K562 (cell line): ENCODE measurements at regions of chr5 and their contacts with region 1.

Region 1: DNA sequence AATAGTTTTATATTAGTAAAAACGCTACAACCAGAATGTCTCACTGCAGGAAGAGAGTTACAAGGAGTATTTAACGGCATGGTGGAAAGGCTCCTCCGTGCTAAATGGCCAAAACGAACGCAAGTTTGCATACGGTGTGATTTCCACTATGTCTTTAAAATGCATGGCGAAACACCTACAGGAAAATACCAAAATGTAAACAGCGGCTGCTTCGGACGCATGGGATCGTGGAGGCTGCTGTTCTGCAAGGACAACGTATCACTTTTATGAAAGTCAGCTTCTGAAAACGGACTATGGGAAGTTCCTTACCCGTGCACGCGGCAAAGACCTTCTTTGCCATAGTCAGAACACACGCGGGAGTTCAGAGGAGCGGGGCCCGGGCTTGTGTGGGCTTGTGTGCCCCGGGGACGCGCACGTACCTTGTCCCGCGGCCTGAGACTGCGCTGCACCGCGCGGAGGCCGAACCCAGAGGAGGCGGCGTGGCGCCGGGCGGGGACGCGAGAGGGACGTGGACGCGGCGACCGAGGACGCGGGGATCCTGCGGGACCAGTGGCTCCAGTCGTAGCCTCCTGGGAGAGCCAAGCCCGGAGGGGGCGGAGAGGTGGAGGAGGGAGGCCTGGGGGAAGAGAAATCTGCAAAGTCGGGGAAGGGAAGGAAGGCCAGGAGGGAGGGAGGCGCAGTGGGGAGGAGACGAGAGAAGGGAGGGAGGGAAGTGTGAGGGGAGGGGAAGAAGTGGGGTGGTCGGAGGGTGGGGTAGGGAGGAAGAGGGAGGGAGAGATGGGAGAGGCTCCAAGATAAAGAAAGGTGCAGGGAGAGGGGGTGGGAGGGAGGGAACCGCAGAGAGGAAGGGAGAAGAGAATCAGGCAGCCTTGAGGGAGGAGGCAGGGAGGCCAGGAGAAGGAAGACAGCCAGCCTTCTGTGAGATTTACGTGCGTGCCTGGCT is at the start of gene CMBL:
- DNase-seq: peak; percentile 90 to 95 (median 92)
- ATAC-seq: peak; percentile 70
- H3K4me3 ChIP-seq: peak within 1 kb of the TSS; percentile 78
- H3K27ac ChIP-seq: peak within 1 kb of the TSS; percentile 91
- H3K4me1 ChIP-seq: peaks cover 48 to 77% of the 10 kb centered on the region in 2 experiments
- H3K27me3 ChIP-seq: no peaks in the 10 kb centered on the region
- CTCF ChIP-seq: 0 out of 6 replicates have a peak, but pooled peaks of 1 of the 3 experiments have one; percentile 1
- EP300 ChIP-seq: peak; percentile 42
- POLR2A ChIP-seq: peak; percentile 86
- RAD21 ChIP-seq: peak in 1 of 2 experiments; percentile 11; a peak in 1 of 4 replicates
- polyA plus RNA-seq, gene CMBL: 53.4 to 71.1 TPM

Region 2: DNA sequence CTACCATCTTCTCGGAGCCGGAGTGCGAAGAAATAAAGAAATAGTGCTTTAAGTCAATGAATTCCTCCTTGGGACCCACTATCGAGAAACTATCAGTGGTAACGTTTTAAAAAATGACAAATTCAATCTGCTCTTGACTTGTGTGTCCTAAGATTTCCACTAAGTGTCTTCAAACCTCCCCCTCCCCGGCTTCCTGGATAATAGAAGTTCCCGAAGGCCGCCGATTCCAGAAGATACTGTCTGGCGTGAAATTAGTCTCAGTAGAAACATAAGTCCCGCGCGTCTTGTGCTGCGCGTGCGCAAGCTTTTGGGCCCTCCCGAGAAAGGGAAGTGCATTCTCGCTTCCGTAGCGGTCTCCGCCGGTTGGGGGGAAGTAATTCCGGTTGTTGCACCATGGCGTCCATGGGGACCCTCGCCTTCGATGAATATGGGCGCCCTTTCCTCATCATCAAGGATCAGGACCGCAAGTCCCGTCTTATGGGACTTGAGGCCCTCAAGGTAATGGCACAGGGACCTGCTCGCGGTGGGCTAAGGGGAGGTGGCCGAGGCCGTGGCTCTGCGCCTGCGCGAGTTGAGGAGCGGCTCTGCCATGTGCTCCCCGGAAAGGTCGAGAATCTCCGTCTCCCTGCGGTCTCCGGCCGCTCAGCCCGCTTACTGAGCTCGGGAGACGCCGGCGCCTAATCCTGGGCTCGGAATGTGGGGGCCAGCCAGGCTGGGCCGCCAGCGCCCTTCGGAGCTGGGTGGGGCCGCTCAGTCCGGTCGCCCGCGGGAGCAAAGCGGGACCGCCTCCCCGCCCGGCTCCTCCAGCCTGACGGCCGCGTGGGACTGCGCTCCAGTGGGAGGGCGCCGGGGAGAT is 57.3 kb before region 1 on chr5 and contains the start of gene CCT5:
- CTCF ChIA-PET with region 1: no interaction called
- POLR2A ChIA-PET with region 1: interaction called, 6 read pairs
- in situ Hi-C with region 1: no loop called
- intact Hi-C with region 1: loop called (anchors 5 kb)
- DNase-seq: peak; percentile 93 to 99 (median 96)
- ATAC-seq: peak; percentile 76
- H3K4me3 ChIP-seq: peak within 1 kb of the TSS; percentile 83
- H3K27ac ChIP-seq: peak within 1 kb of the TSS; percentile 95
- H3K4me1 ChIP-seq: peaks cover 12 to 20% of the 10 kb centered on the region in 2 experiments
- H3K27me3 ChIP-seq: no peaks in the 10 kb centered on the region
- CTCF ChIP-seq: no peak
- EP300 ChIP-seq: peak; percentile 15; the same call in 1 of the 2 replicates
- POLR2A ChIP-seq: peak; percentile 99
- RAD21 ChIP-seq: 0 out of 4 replicates have a peak, but pooled peaks of 1 of the 2 experiments have one; percentile 9
- polyA plus RNA-seq, gene CCT5: 926 to 1,606 TPM

Region 3: DNA sequence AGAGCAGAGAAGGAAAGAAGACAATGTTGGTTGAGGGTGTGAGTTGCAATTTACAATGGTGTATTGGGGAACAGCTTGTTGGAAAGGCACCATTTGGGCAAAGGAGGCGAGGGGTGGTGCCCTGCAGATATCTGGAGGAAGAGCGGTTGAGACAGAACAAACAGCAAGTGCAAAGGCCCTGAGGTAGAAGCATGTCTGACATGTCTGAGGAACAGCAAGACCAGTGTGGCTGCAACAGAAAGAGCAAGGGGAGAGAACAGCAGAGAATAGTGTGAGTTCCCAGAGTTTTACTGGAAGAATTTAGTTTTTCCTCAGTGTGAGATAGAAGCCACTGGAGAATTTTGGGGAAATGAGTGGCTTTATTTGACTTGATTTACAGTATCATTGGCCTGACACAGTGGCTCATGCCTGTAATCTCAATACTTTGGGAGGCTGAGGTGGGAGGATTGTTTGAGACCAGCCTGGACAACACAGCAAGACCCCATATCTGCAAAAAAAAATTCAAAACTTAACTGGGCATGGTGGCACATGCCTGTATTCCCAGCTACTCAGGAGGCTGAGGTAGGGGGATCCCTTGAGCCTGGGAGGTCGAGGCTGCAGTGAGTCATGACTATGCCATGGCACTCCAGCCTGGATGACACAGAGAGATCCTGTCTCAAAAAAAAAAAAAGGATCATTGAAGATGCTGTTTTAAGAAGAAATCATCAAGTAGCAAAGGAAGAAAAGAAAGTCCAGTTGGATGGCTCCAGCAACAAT is 13.4 kb before region 1 on chr5:
- CTCF ChIA-PET with region 1: no interaction called
- POLR2A ChIA-PET with region 1: interaction called, 9 read pairs
- in situ Hi-C with region 1: no loop called
- intact Hi-C with region 1: loop called (anchors 1 kb)
- DNase-seq: no peak
- ATAC-seq: no peak; the same call in 2 of the 3 replicates
- H3K4me3 ChIP-seq: no peak overlapping the region
- H3K27ac ChIP-seq: peak overlapping the region; percentile 81
- H3K4me1 ChIP-seq: peaks cover 44 to 60% of the 10 kb centered on the region in 2 experiments
- H3K27me3 ChIP-seq: no peaks in the 10 kb centered on the region
- CTCF ChIP-seq: no peak
- EP300 ChIP-seq: no peak
- POLR2A ChIP-seq: no peak
- RAD21 ChIP-seq: no peak

Region 4: GRCh38 chr5:10528056-10528816 is 220.8 kb after region 1 on chr5:
- CTCF ChIA-PET with region 1: no interaction called
- POLR2A ChIA-PET with region 1: no interaction called
- in situ Hi-C with region 1: no loop called
- intact Hi-C with region 1: no loop called
- DNase-seq: no peak
- ATAC-seq: peak; percentile 50
- H3K4me3 ChIP-seq: no peak overlapping the region
- H3K27ac ChIP-seq: no peak overlapping the region
- H3K4me1 ChIP-seq: peaks cover 4 to 7% of the 10 kb centered on the region in 2 experiments; a peak in 4 of 5 replicates
- H3K27me3 ChIP-seq: peaks cover 22 to 53% of the 10 kb centered on the region in 2 experiments
- CTCF ChIP-seq: peak; percentile 29 to 45 (median 30); a peak in 3 of 6 replicates
- EP300 ChIP-seq: no peak
- POLR2A ChIP-seq: no peak
- RAD21 ChIP-seq: peak; percentile 19 to 58; a peak in 2 of 4 replicates

Region 5: DNA sequence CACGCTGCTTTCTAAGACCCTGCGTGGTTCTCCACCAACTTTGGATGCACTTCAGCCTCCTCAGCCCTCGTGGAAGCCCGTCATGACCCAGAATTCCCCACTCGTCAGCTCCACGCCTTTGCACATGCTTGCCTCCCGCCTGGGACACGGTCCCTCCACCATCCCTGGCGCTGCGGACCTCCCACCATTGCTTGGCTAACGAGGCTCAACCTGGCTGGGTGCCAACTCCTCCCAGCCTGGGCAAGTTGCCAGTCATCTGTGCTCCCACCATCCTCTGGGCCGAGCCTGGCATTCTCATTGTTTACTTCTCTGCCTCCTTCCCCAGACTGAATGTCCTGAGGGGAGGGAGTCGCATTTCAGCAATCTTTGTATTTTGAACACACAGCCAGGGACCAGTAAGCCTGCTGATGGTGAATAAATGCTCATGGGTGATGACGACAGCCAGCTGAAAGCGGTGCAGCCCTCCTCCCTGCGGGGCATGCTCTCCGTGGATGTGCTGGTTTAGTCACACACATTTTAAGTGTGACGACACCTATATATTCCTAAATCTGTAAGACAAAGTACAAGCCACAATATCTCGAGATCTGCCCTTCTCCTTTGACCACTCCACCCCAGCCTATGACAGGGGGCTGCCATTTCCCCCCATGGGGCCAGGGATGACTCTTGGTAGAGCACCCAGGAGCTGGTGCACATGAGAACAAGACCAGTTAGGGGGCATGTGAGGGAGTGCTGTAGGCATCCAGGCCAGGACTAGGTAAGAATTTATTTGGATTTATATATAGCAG is 294.0 kb after region 1 on chr5:
- CTCF ChIA-PET with region 1: no interaction called
- POLR2A ChIA-PET with region 1: no interaction called
- in situ Hi-C with region 1: no loop called
- intact Hi-C with region 1: loop called (anchors 10 kb)
- DNase-seq: peak; percentile 49 to 76 (median 58)
- ATAC-seq: peak; percentile 68
- H3K4me3 ChIP-seq: no peak overlapping the region
- H3K27ac ChIP-seq: peak overlapping the region; percentile 51; the same call in 2 of the 3 replicates
- H3K4me1 ChIP-seq: peaks cover 22 to 31% of the 10 kb centered on the region in 2 experiments
- H3K27me3 ChIP-seq: no peaks in the 10 kb centered on the region
- CTCF ChIP-seq: no peak
- EP300 ChIP-seq: no peak
- POLR2A ChIP-seq: no peak
- RAD21 ChIP-seq: no peak; a peak in 1 of 4 replicates

Region 6: DNA sequence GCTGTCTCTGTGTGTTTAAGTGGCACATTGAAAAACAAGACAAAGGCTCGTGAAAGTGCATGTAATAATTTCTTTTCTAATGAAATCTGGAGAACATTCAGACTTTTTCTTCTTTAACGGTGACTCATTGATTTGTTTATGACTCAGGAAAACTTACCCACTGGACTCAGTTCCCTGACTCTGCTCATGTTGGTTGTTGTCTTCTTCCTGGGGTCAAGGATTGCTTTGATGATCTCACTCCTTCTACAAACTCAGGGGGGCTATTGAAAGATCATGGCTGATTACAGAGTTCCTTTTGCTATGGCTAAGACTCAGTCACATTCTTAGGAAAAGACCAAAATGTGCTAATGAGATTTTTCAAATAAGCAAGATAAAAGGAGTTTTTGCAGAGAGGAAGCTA is 594.7 kb after region 1 on chr5:
- CTCF ChIA-PET with region 1: no interaction called
- POLR2A ChIA-PET with region 1: no interaction called
- in situ Hi-C with region 1: no loop called
- intact Hi-C with region 1: no loop called
- DNase-seq: no peak
- ATAC-seq: no peak
- H3K4me3 ChIP-seq: no peak overlapping the region
- H3K27ac ChIP-seq: no peak overlapping the region
- H3K4me1 ChIP-seq: no peaks in the 10 kb centered on the region
- H3K27me3 ChIP-seq: peaks cover 3 to 5% of the 10 kb centered on the region in 2 experiments; a peak in 2 of 5 replicates
- CTCF ChIP-seq: no peak
- EP300 ChIP-seq: no peak
- POLR2A ChIP-seq: no peak
- RAD21 ChIP-seq: no peak